ENCODE measurements at regions of chr2 and their contacts with region 1.

Region 1: GRCh38 chr2:215920244-215921100 is 92.9 kb downstream of the MREG start:
- DNase-seq: peak; percentile 61 to 69
- H3K4me3 ChIP-seq: no peak overlapping the region
- H3K27ac ChIP-seq: no peak overlapping the region
- H3K4me1 ChIP-seq: peaks cover 16% of the 10 kb centered on the region
- H3K27me3 ChIP-seq: no peaks in the 10 kb centered on the region
- CTCF ChIP-seq: peak; percentile 93

Region 2: DNA sequence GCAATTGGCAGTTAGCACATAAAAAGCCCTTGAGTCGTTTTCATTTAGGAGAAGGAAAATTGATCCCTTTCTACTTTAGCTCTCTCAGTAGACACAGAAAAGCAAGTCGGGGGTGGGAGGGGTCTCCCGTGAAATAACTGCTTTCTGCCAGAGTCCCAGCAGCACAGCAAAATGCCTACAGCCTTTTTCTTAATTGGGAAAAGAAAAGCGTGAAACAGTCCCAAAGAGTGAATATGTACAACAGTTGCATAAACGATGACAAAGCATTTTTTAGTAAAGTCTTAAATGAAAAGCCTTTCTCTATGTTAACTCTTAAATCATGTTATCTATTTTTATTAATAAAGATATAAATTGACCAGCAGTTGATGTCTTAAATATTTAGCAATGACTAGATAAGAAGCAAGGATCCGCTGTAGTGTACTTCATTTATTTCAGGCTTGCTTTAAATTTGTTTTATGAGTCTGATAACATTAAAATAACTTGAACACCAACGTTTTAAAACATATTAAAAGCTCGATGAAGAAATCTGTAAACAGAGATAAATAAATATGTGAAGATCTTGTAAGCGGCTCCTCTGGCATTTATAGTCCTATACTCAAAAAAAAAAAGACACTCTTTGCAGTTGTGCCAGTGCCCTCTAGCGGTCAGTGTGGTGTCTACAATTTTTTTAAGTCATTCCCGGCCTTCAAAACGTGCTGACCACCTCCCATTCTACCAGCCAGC is 650.9 kb before region 1 on chr2:
- CTCF ChIA-PET with region 1: interaction called, 8 read pairs
- POLR2A ChIA-PET with region 1: no interaction called
- intact Hi-C with region 1: loop called (anchors 5 kb)
- DNase-seq: peak; percentile 61 to 77
- H3K4me3 ChIP-seq: no peak overlapping the region
- H3K27ac ChIP-seq: no peak overlapping the region
- H3K4me1 ChIP-seq: no peaks in the 10 kb centered on the region; the same call in 1 of the 2 replicates
- H3K27me3 ChIP-seq: no peaks in the 10 kb centered on the region
- CTCF ChIP-seq: peak; percentile 98

Region 3: DNA sequence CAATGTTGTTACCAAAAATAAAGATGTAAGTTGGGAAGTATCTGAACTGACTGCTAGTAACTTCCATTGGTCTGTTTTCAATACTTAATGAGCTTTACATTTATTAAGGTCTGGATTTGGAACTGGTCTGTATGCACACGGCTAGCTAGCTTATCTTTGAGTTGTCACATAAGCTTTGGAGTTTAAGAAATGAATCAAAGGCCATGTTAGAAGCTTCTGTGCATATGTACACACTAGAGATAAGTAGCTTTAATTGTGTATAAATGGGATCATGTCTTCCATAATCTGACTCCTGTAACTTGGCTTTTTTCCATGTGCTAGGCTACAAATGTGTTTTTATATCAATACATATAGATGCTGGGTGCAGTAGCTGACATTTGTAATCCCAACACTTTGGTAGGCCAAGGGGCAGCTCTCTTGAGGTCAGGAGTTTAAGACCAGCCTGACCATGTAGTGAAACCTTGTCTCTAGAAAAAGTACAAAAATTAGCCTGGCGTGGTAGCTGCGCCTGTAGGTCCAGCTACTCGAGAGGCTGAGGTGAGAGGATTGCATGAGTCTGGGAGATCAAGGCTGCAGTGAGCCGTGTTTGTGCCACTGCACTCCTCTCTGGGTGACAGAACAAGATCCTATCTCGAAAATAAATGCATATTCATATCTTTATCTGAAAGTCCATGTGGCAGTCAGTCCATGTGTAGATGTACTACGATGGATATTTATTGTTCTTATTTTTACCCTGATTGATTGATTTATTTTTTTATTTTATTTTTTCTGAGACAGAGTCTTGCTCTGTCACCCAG is 581.4 kb before region 1 on chr2:
- CTCF ChIA-PET with region 1: no interaction called
- POLR2A ChIA-PET with region 1: interaction called, 17 read pairs
- intact Hi-C with region 1: no loop called
- DNase-seq: no peak
- H3K4me3 ChIP-seq: no peak overlapping the region
- H3K27ac ChIP-seq: no peak overlapping the region
- H3K4me1 ChIP-seq: no peaks in the 10 kb centered on the region
- H3K27me3 ChIP-seq: no peaks in the 10 kb centered on the region
- CTCF ChIP-seq: no peak

Region 4: GRCh38 chr2:215454519-215455246 is 465.8 kb before region 1 on chr2:
- CTCF ChIA-PET with region 1: no interaction called
- POLR2A ChIA-PET with region 1: no interaction called
- intact Hi-C with region 1: loop called (anchors 1 kb)
- DNase-seq: no peak
- H3K4me3 ChIP-seq: no peak overlapping the region
- H3K27ac ChIP-seq: no peak overlapping the region
- H3K4me1 ChIP-seq: no peaks in the 10 kb centered on the region
- H3K27me3 ChIP-seq: no peaks in the 10 kb centered on the region
- CTCF ChIP-seq: peak; percentile 96

Region 5: DNA sequence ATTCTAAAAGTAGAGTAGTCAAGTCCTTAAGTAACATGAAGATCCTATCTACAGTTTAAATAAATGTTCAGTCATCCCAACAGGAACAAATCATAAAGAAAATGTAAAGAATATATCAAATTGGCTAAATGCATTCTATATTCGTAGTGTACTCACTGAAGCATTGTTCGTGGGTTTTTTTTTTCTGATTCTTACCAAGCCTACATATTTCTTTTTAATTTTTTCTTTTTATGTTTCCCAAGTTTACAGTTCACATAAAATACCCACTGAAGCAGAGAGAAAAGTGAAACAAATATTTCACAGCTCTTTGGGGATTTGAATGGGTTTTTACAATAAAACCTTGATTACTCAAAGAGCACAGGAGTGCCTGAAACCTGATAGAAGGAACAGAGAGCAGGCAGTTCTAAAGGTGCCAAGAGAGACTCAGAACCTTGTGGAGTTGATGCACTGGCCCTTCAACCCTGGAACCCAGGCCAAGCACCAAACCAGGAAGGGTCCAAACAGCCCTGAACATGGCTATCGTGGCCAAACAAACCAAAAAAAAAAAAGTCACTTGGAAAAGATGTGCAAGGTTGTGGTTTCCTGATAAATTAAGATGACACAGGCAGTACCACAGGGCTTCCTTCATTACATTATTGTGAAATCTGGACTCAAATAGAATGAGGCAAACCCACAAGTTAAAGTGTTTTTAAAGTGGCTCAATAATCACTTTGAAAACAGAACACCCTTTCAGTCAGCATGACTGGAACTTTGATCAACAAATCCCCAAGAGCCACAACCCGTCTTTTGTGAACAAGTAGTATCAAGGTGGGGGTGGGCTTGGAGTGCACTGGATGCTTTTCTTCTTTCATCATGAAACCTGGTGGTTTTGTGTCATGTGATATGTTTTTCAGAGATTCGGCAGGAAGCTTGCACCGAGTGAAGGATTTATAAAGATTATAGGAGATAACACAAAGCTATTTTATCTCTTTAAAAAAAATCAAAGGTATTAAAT is 239.6 kb before region 1 on chr2:
- CTCF ChIA-PET with region 1: no interaction called
- POLR2A ChIA-PET with region 1: no interaction called
- intact Hi-C with region 1: loop called (anchors 2 kb)
- DNase-seq: peak; percentile 27 to 92
- H3K4me3 ChIP-seq: peak overlapping the region; percentile 1; the same call in 1 of the 2 replicates
- H3K27ac ChIP-seq: peak overlapping the region; percentile 61
- H3K4me1 ChIP-seq: peaks cover 46% of the 10 kb centered on the region
- H3K27me3 ChIP-seq: no peaks in the 10 kb centered on the region
- CTCF ChIP-seq: no peak

Region 6: DNA sequence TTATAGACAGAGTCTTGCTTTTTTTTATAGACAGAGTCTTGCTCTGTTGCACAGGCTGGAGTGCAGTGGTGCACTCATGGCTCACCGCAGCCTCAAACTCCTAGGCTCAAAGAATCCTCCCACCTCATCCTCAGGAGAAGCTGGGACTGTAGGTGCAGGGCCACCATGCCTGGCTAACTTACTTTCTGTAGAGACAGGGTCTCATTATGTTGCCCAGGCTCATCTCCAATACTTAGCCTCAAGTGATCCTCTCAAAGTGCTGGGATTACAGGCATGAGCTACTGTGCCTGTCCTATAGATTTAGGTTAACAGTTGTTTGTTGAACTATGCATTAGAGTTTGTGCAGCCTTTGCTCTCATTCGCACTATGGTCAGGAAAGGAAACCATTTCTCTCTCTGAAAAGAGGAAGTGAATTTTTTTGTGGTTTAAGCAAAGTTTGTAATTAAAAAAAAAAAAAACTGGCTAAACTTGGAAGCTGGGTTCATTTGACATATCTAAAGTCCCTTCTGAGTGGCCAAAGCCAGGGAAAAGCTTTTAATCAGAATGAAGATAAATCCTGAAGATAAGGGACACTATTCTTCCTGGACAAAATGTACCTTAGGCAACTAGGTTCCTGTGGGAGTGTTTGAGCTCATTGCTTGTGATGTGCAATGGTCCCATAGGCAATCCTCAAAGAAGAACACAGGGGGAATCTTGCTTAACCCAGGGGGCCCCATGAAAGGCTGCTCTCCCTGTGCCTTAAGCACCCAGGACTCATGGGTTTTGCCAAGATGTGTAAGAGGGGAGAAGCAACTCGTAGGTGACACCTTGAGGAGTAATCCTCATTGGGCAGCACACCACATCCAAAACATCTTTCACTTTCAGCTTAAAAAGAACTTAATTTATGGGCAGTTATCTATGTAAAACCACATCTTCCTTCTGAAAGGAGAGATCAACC is 108.8 kb before region 1 on chr2:
- CTCF ChIA-PET with region 1: interaction called, 13 read pairs
- POLR2A ChIA-PET with region 1: no interaction called
- intact Hi-C with region 1: no loop called
- DNase-seq: no peak
- H3K4me3 ChIP-seq: no peak overlapping the region
- H3K27ac ChIP-seq: no peak overlapping the region
- H3K4me1 ChIP-seq: peaks cover 20% of the 10 kb centered on the region
- H3K27me3 ChIP-seq: no peaks in the 10 kb centered on the region
- CTCF ChIP-seq: no peak

Region 7: DNA sequence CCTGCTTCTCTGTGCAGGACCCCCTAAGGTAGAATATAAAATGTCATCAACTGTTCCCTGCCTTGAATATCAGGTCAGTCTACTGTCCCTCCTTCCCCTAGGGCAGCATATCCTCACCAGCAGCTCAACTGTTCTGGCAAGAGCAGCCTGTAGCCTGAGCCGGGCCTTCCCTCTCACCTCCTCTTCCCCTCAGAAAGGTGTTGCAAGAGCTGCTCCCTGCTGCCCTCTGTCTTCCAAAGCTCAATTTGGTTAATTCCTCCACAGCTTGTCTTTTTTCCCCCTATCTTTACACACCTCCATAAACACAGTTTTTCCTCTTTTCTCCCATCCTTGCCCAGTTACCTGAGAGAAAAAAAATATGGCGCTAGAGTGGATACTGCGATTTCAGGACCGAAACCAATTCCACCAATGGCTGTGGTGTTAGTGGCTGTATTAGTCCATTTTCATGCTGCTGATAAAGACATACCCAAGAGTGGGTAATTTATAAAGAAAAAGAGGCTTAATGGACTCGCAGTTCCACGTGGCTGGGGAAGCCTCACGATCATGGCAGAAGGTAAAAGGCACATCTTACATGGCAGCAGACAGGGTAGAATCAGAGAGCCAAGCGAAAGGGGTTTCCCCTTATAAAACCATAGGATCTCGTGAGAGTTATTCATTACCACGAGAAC is 91.8 kb before region 1 on chr2:
- CTCF ChIA-PET with region 1: interaction called, 13 read pairs
- POLR2A ChIA-PET with region 1: no interaction called
- intact Hi-C with region 1: loop called (anchors 1 kb)
- DNase-seq: peak; percentile 60 to 65
- H3K4me3 ChIP-seq: no peak overlapping the region
- H3K27ac ChIP-seq: no peak overlapping the region
- H3K4me1 ChIP-seq: peaks cover 50% of the 10 kb centered on the region
- H3K27me3 ChIP-seq: no peaks in the 10 kb centered on the region
- CTCF ChIP-seq: peak; percentile 85

Measured in PC-9 (cell line).